MCF 10A (cell line): ENCODE measurements at regions of chr6 and their contacts with region 1.

Region 1: DNA sequence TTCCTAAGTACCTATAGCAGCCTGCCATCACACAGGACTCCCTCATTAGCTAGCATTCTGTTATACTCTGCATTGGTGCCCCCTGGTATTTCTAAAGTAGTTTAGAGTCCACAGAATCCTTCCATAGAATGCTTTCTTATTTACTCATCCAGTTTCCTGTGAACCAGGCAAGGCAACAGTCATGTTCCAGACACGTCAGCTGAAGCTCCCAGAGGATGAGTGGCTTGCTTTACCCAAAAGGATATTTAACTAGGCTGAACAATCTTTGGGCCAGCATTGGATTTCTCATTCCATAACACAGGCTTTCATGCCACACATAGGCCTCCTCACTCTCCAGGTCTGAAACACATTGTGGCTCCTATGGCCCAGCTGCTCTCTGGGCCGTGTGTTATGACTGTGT is 203.8 kb upstream of the MAP3K7 start:
- DNase-seq: peak; percentile 2
- H3K4me3 Mint-ChIP-seq: no peak overlapping the region
- H3K27ac Mint-ChIP-seq: no peak overlapping the region
- H3K4me1 Mint-ChIP-seq: no peaks in the 10 kb centered on the region
- H3K27me3 Mint-ChIP-seq: no peaks in the 10 kb centered on the region
- CTCF ChIP-seq: no peak

Region 2: GRCh38 chr6:90637320-90637719 is 153.4 kb before region 1 on chr6:
- CTCF ChIA-PET with region 1: no interaction called
- POLR2A ChIA-PET with region 1: no interaction called
- intact Hi-C with region 1: loop called (anchors 5 kb)
- DNase-seq: no peak
- H3K4me3 Mint-ChIP-seq: no peak overlapping the region
- H3K27ac Mint-ChIP-seq: no peak overlapping the region
- H3K4me1 Mint-ChIP-seq: no peaks in the 10 kb centered on the region
- H3K27me3 Mint-ChIP-seq: peaks cover 26% of the 10 kb centered on the region
- CTCF ChIP-seq: no peak